Heart left ventricle (tissue), 16 donors: ENCODE measurements at regions of chr1 and their contacts with region 1.

Region 1: GRCh38 chr1:180178511-180179161 is 24.0 kb downstream of the QSOX1 start:
- DNase-seq: peak; percentile 45 to 79 (median 55)
- ATAC-seq: no peak
- H3K4me3 ChIP-seq: no peak overlapping the region
- H3K27ac ChIP-seq: no peak overlapping the region
- H3K4me1 ChIP-seq: peaks cover 4 to 30% (median 20%) of the 10 kb centered on the region in 12 donors
- H3K27me3 ChIP-seq: no peaks in the 10 kb centered on the region
- CTCF ChIP-seq: peak; percentile 84 to 98 (median 94)
- POLR2A ChIP-seq: no peak

Region 2: GRCh38 chr1:179706339-179706941 is 472.2 kb before region 1 on chr1:
- intact Hi-C with region 1: loop called in 4 of 10 experiments (anchors 5 to 10 kb)
- DNase-seq: peak in 4 of 5 donors; percentile 37 to 63 (median 50)
- ATAC-seq: no peak
- H3K4me3 ChIP-seq: no peak overlapping the region
- H3K27ac ChIP-seq: no peak overlapping the region
- H3K4me1 ChIP-seq: peaks cover 0 to 30% (median 18%) of the 10 kb centered on the region in 12 donors
- H3K27me3 ChIP-seq: peaks cover 0 to 4% (median 0%) of the 10 kb centered on the region in 9 donors
- CTCF ChIP-seq: peak; percentile 47 to 90 (median 78)
- POLR2A ChIP-seq: no peak

Region 3: GRCh38 chr1:179867807-179868330 is 310.8 kb before region 1 on chr1:
- intact Hi-C with region 1: loop called in 9 of 10 experiments (anchors 5 to 10 kb)
- DNase-seq: peak in 1 of 5 donors; percentile 47
- ATAC-seq: peak in 3 of 4 donors; percentile 45 to 63 (median 55)
- H3K4me3 ChIP-seq: no peak overlapping the region
- H3K27ac ChIP-seq: no peak overlapping the region
- H3K4me1 ChIP-seq: peaks cover 0 to 38% (median 22%) of the 10 kb centered on the region in 12 donors
- H3K27me3 ChIP-seq: no peaks in the 10 kb centered on the region
- CTCF ChIP-seq: peak; percentile 42 to 73 (median 63)
- POLR2A ChIP-seq: no peak

Region 4: DNA sequence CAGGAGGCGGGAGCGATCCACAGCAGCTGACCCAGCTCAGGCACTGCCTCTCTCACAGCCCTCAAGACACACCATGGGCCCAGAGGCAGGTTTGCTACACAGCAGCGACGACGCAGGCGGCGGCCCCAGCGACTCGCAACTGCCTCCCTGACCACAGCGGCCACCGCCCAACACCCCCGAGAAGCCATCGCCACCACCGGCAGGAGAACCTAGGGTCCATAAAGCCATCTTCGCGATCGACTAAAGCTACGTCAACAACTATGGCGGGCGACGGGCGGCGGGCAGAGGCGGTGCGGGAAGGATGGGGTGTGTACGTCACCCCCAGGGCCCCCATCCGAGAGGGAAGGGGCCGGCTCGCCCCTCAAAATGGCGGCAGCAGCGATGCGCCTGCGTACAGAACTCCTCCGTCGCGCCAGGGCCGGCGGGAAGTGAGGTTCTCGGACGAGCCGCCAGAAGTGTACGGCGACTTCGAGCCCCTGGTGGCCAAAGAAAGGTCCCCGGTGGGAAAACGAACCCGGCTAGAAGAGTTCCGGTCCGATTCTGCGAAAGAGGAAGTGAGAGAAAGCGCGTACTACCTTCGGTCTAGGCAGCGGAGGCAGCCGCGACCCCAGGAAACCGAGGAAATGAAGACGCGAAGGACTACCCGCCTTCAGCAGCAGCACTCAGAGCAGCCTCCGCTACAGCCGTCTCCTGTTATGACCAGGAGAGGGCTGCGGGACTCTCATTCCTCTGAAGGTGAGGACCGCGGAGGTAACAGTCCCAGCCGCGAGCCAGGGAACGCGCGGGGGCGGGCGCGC is 296.2 kb before region 1 on chr1 and contains the start of gene TOR1AIP1:
- intact Hi-C with region 1: loop called in 2 of 10 experiments (anchors 10 kb)
- DNase-seq: peak; percentile 97 to 99 (median 98)
- ATAC-seq: peak; percentile 93 to 96 (median 95)
- H3K4me3 ChIP-seq: peak within 1 kb of the TSS; percentile 72 to 88 (median 82)
- H3K27ac ChIP-seq: peak within 1 kb of the TSS; percentile 98 to 100 (median 99)
- H3K4me1 ChIP-seq: peaks cover 0 to 58% (median 38%) of the 10 kb centered on the region in 12 donors
- H3K27me3 ChIP-seq: no peaks in the 10 kb centered on the region
- CTCF ChIP-seq: peak in 11 of 12 donors; percentile 29 to 58 (median 51)
- POLR2A ChIP-seq: peak; percentile 3 to 88
- total RNA-seq, gene TOR1AIP1: 25.4 to 68.2 (median 47.4) TPM

Region 5: GRCh38 chr1:179938752-179939151 is 239.9 kb before region 1 on chr1:
- intact Hi-C with region 1: no loop called
- DNase-seq: no peak
- ATAC-seq: no peak
- H3K4me3 ChIP-seq: no peak overlapping the region
- H3K27ac ChIP-seq: no peak overlapping the region
- H3K4me1 ChIP-seq: no peaks in the 10 kb centered on the region
- H3K27me3 ChIP-seq: no peaks in the 10 kb centered on the region
- CTCF ChIP-seq: no peak
- POLR2A ChIP-seq: no peak

Region 6: GRCh38 chr1:180101411-180101810 is 77.2 kb before region 1 on chr1:
- intact Hi-C with region 1: loop called in 3 of 10 experiments (anchors 5 kb)
- DNase-seq: no peak
- ATAC-seq: no peak
- H3K4me3 ChIP-seq: no peak overlapping the region
- H3K27ac ChIP-seq: no peak overlapping the region
- H3K4me1 ChIP-seq: peaks cover 0 to 13% (median 3%) of the 10 kb centered on the region in 12 donors
- H3K27me3 ChIP-seq: no peaks in the 10 kb centered on the region
- CTCF ChIP-seq: no peak
- POLR2A ChIP-seq: no peak

Region 7: DNA sequence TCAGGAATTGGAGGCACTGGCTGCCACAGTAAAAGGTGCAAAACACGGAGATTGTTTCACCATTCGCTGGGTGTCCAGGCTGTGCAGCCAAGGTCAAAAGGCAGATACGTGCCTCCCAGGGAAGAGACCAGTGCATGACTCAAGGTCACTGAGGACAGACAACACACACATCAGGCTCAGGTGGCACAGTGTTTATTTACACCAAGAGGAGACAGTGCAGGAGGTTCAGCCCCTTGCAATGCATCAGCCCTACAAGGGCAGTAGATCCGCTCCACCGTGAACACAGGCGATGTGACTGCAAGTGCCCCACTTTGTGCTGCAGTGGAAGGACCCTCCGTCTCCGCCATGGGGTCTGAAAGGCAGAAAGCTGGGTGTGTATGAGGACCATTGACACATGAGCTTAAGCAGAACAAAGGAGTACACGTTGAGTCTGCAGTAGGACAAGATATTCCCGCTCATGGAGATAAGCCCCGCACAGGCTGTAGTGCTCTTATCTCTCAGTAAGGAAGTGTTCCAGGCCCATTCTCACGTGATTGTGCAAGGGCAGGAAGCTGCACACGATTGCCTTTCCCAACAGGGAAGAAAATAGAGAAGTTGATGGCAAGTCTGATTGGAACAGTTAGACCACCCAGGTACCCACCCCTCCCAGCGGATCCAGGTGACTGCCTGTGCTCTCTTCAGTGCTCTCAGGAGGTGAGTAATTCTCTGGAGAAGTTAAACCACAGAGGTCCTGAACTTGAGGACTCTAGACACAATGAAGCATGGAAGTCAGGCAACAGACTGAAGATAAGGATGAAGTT is 61.5 kb before region 1 on chr1:
- intact Hi-C with region 1: loop called in 7 of 10 experiments (anchors 2 to 10 kb)
- DNase-seq: peak in 4 of 5 donors; percentile 17 to 59 (median 32)
- ATAC-seq: peak; percentile 72 to 90 (median 82)
- H3K4me3 ChIP-seq: no peak overlapping the region
- H3K27ac ChIP-seq: peak overlapping the region in 3 of 12 donors; percentile 11 to 49 (median 40)
- H3K4me1 ChIP-seq: peaks cover 0 to 42% (median 20%) of the 10 kb centered on the region in 12 donors
- H3K27me3 ChIP-seq: no peaks in the 10 kb centered on the region
- CTCF ChIP-seq: no peak
- POLR2A ChIP-seq: no peak

Region 8: DNA sequence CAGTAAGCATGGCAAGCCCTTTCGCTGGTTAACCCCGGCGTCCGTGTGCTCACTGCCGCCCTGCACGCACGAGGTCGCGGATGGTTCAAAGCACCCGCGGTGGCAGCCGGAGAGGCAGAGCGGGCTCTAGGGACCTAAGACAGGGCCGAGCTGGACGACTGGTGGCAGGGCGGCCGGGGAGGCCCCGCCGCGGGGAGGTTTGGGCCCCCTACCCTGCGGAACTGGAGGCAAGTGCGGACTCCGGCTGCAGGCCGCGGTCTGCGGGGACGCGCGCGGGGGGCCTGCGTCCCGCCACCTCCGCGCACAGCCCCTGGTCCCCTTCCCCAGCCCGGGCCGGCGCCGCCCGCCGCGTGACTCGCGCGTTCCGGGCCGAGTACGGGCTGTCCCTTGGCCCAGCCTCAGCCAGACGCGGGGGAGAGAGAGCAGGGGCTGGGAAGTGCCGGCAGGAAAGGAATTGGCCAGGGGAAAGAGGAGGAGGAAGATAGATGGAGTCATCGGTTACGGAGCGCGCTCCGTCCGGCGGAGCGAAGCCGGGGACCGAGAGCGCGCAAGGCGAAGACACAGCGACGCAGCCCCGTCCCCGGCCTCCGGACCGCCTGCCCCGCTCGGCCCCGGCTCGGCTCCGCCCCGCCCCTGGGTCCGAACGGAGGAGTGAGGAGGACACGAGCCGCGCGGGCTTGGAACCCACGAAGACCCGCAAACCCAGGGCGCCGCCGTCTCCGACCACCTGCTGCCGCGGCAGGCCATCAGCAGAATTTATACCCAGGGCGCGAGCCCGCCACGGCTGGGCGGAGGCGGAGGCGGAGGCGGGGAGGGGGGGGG is 50.7 kb after region 1 on chr1:
- intact Hi-C with region 1: no loop called
- DNase-seq: no peak
- ATAC-seq: peak in 3 of 4 donors; percentile 29 to 72 (median 43)
- H3K4me3 ChIP-seq: peak overlapping the region; percentile 50 to 68 (median 54)
- H3K27ac ChIP-seq: no peak overlapping the region
- H3K4me1 ChIP-seq: peaks cover 5 to 47% (median 33%) of the 10 kb centered on the region in 12 donors
- H3K27me3 ChIP-seq: peaks cover 63 to 100% (median 87%) of the 10 kb centered on the region in 9 donors
- CTCF ChIP-seq: no peak
- POLR2A ChIP-seq: no peak